ENCODE measurements at regions of chr6 and their contacts with region 1.

Region 1: GRCh38 chr6:42984001-42984923 is at the start of gene PPP2R5D:
- DNase-seq: peak; percentile 92 to 97
- ATAC-seq: peak; percentile 95 to 97
- H3K4me3 ChIP-seq: peak within 1 kb of the TSS; percentile 67
- H3K27ac ChIP-seq: peak within 1 kb of the TSS; percentile 80 to 93
- H3K4me1 ChIP-seq: 0 out of 3 replicates have a peak, but pooled peaks cover 11% of the 10 kb centered on the region
- CTCF ChIP-seq: no peak
- EP300 ChIP-seq: no peak
- POLR2A ChIP-seq: peak; percentile 92
- RAD21 ChIP-seq: no peak
- polyA plus RNA-seq, gene PPP2R5D: 34.6 and 41.6 TPM in 2 replicates

Region 2: DNA sequence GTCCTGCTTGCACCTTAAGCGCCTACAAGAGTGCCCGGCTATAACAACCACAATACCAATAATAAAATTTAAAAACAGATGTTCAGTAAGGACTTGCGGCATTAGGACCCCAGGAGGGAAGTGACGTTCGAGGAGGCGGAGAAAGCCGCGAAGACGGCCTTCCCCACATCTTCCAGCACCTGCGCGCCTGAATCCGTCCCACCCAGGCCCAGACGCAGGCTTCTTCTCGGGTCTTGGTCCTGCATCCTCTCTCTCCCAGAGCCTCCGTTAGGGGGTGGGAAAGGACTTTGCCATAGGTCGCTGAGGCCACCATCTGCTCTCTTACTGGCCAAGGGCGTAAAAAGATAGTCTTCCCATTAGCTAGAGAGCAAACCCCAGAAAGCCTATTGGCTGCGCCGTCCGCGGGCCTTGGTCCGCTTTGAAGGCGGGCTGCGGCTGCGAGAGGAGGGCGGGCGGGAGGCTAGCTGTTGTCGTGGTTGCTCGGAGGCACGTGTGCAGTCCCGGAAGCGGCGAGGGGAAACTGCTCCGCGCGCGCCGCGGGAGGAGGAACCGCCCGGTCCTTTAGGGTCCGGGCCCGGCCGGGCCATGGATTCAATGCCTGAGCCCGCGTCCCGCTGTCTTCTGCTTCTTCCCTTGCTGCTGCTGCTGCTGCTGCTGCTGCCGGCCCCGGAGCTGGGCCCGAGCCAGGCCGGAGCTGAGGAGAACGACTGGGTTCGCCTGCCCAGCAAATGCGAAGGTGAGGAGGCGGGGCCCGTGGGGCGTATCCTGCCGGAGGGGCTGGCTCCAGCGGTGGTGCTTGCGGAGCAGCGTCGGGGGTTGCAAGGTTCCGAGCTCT is 55.1 kb before region 1 on chr6 and contains the start of gene CNPY3:
- CTCF ChIA-PET with region 1: no interaction called
- POLR2A ChIA-PET with region 1: interaction called, 13 read pairs
- DNase-seq: peak; percentile 88 to 98
- ATAC-seq: peak; percentile 97
- H3K4me3 ChIP-seq: peak within 1 kb of the TSS; percentile 62
- H3K27ac ChIP-seq: peak within 1 kb of the TSS; percentile 84 to 97
- H3K4me1 ChIP-seq: peaks cover 11% of the 10 kb centered on the region; the same call in 2 of the 3 replicates
- CTCF ChIP-seq: no peak
- EP300 ChIP-seq: no peak
- POLR2A ChIP-seq: peak; percentile 51
- RAD21 ChIP-seq: no peak
- polyA plus RNA-seq, gene CNPY3: 28.2 and 30.3 TPM in 2 replicates

Region 3: DNA sequence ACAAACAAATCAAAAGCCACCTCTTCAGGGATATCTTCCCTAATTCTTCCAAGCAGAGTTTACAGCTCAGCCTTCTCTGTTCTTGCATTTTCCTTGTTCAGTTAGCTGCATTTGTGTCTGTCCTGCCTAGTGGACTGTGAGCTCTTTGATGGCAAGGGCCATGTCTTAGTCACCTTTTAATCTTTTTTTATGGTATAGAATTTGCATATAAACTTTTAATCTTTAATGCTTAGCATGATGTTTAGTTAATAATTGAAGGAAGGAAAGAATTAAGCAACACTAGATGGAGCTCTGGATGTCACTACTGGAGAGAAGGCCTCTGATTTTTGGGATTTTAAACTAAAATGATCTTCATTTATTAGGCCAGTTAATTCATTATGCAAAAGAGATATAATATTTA is 12.3 kb after region 1 on chr6:
- CTCF ChIA-PET with region 1: interaction called, 5 read pairs
- POLR2A ChIA-PET with region 1: interaction called, 13 read pairs
- DNase-seq: no peak
- ATAC-seq: peak in 1 of 2 experiments; percentile 34; a peak in 1 of 6 replicates
- H3K4me3 ChIP-seq: no peak overlapping the region
- H3K27ac ChIP-seq: no peak overlapping the region
- H3K4me1 ChIP-seq: peaks cover 7% of the 10 kb centered on the region; the same call in 2 of the 3 replicates
- CTCF ChIP-seq: no peak
- EP300 ChIP-seq: no peak
- POLR2A ChIP-seq: no peak
- RAD21 ChIP-seq: no peak

Region 4: GRCh38 chr6:43013843-43014433 is 29.7 kb after region 1 on chr6 and contains the starts of genes KLHDC3 and MEA1:
- CTCF ChIA-PET with region 1: interaction called, 3 read pairs
- POLR2A ChIA-PET with region 1: interaction called, 15 read pairs
- DNase-seq: peak; percentile 94 to 99
- ATAC-seq: peak; percentile 94 to 96
- H3K4me3 ChIP-seq: peak within 1 kb of the TSS; percentile 92
- H3K27ac ChIP-seq: peak within 1 kb of the TSS; percentile 87 to 91
- H3K4me1 ChIP-seq: peaks cover 13% of the 10 kb centered on the region; the same call in 1 of the 3 replicates
- CTCF ChIP-seq: no peak
- EP300 ChIP-seq: no peak
- POLR2A ChIP-seq: 0 out of 2 replicates have a peak, but pooled peaks have one; percentile 36
- RAD21 ChIP-seq: no peak
- polyA plus RNA-seq, gene KLHDC3: 18.8 and 21.3 TPM in 2 replicates
- polyA plus RNA-seq, gene MEA1: 58.6 and 63.4 TPM in 2 replicates

Region 5: GRCh38 chr6:43059168-43060033 is 75.1 kb after region 1 on chr6 and contains the starts of genes KLC4 and MRPL2:
- CTCF ChIA-PET with region 1: interaction called, 5 read pairs
- POLR2A ChIA-PET with region 1: interaction called, 10 read pairs
- DNase-seq: peak; percentile 97 to 98
- ATAC-seq: peak; percentile 88 to 96
- H3K4me3 ChIP-seq: peak within 1 kb of the TSS; percentile 100
- H3K27ac ChIP-seq: peak within 1 kb of the TSS; percentile 90 to 97
- H3K4me1 ChIP-seq: peaks cover 14% of the 10 kb centered on the region
- CTCF ChIP-seq: no peak
- EP300 ChIP-seq: no peak
- POLR2A ChIP-seq: peak; percentile 85
- RAD21 ChIP-seq: no peak
- polyA plus RNA-seq, gene KLC4: 8.4 and 10.0 TPM in 2 replicates
- polyA plus RNA-seq, gene MRPL2: 20.9 and 33.7 TPM in 2 replicates